Right ventricle myocardium inferior (tissue), 1 donor: ENCODE measurements at regions of chr21 and their contacts with region 1.

Region 1: GRCh38 chr21:42746593-42747275 is 93.3 kb downstream of the PDE9A start:
- DNase-seq: peak; percentile 81
- ATAC-seq: no peak

Region 2: GRCh38 chr21:42652527-42653230 is 94.1 kb before region 1 on chr21:
- intact Hi-C with region 1: loop called (anchors 10 kb)
- DNase-seq: no peak
- ATAC-seq: peak; percentile 73

Region 3: GRCh38 chr21:42734323-42734971 is 12.3 kb before region 1 on chr21:
- intact Hi-C with region 1: no loop called
- DNase-seq: no peak
- ATAC-seq: no peak

Region 4: GRCh38 chr21:42781150-42781970 is 34.6 kb after region 1 on chr21:
- intact Hi-C with region 1: loop called (anchors 5 kb)
- DNase-seq: no peak
- ATAC-seq: no peak

Region 5: DNA sequence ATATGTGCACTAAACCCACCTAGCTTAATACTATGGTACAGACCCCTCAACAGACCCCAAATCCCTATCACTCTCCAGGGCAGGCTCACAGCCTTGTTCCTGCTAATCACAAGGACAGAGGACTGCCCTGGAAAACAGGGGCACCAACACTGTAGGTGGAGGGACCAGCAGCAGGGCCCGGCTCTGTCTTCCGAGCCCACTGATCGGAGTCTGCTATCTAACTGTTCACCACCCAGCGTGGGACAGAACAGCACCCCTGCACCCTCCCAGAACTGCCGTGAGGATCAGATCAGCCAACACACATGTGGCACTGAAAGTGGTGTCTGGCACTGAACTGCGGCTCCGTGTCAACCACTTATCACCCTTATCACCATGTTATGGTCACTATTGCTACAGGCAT is 126.4 kb after region 1 on chr21:
- intact Hi-C with region 1: no loop called
- DNase-seq: peak; percentile 13
- ATAC-seq: no peak